Natural killer cell (primary cell): ENCODE measurements at regions of chr12 and their contacts with region 1.

Region 1: GRCh38 chr12:6533923-6534694 is at the start of gene GAPDH:
- DNase-seq: peak; percentile 81 to 90
- ATAC-seq: peak; percentile 53 to 77 (median 71)
- H3K4me3 ChIP-seq: peak within 1 kb of the TSS; percentile 99
- H3K4me3 Mint-ChIP-seq: peak within 1 kb of the TSS; percentile 97
- H3K27ac ChIP-seq: peak within 1 kb of the TSS; percentile 92
- H3K27ac Mint-ChIP-seq: peak within 1 kb of the TSS; percentile 96 to 98
- H3K4me1 ChIP-seq: peaks cover 58% of the 10 kb centered on the region
- H3K4me1 Mint-ChIP-seq: peaks cover 29 to 52% of the 10 kb centered on the region in 2 donors
- H3K27me3 ChIP-seq: no peaks in the 10 kb centered on the region
- H3K27me3 Mint-ChIP-seq: no peaks in the 10 kb centered on the region
- CTCF ChIP-seq: no peak
- total RNA-seq, gene GAPDH: 606 to 729 (median 642) TPM

Region 2: DNA sequence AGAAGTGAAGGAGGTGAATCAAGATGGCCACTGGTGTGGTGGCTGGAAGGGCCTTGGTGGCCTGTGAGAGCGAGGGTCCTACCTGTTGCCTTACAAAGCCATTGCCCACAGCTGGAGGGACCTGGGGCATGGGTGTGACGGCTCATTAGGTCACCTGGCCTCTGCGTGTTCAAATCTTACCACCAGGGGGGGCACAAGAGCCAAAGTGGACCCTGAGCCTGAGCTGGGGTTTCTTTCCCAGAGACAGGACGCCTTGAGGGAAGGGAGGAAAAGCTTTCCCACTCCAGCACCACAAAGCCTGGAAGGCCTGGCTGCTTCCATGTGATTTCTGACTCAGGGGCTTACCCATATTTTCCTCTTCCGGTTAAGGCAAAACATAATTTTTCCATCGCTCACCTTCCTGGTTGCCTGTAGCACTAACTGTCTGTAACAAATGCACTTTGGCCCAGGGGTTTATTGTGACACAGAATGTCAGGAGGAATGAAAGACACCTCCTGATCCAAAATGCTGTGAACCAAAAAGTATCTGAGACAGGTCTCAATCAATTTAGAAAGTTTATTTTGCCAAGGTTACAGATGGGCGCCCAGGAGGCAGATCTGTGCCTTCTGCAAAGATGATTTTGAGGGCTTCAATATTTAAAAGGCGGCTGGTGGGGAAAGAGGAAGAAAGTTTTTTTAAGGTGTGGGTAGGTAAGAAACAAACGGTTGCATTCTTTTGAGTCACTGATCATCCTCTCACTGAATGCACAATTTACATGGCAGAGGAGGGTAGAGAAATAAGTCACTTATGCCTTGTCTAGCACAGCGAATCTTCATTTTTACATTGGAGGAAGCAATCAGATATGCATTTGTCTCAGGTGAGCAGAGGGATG is 338.2 kb before region 1 on chr12:
- intact Hi-C with region 1: loop called (anchors 5 kb)
- DNase-seq: peak; percentile 65 to 84
- ATAC-seq: peak; percentile 72 to 89 (median 85)
- H3K4me3 ChIP-seq: no peak overlapping the region
- H3K4me3 Mint-ChIP-seq: no peak overlapping the region
- H3K27ac ChIP-seq: no peak overlapping the region
- H3K27ac Mint-ChIP-seq: no peak overlapping the region
- H3K4me1 ChIP-seq: peaks cover 13% of the 10 kb centered on the region
- H3K4me1 Mint-ChIP-seq: peaks cover 0 to 17% of the 10 kb centered on the region in 2 donors
- H3K27me3 ChIP-seq: peaks cover 9% of the 10 kb centered on the region
- H3K27me3 Mint-ChIP-seq: peaks cover 23 to 27% of the 10 kb centered on the region in 2 donors
- CTCF ChIP-seq: peak; percentile 83

Region 3: GRCh38 chr12:6335451-6336078 is 198.5 kb before region 1 on chr12:
- intact Hi-C with region 1: loop called (anchors 2 kb)
- DNase-seq: peak; percentile 81 to 93
- ATAC-seq: peak; percentile 55 to 77 (median 70)
- H3K4me3 ChIP-seq: peak overlapping the region; percentile 94
- H3K4me3 Mint-ChIP-seq: no peak overlapping the region
- H3K27ac ChIP-seq: peak overlapping the region; percentile 79
- H3K27ac Mint-ChIP-seq: no peak overlapping the region
- H3K4me1 ChIP-seq: peaks cover 89% of the 10 kb centered on the region
- H3K4me1 Mint-ChIP-seq: peaks cover 6 to 44% of the 10 kb centered on the region in 2 donors
- H3K27me3 ChIP-seq: no peaks in the 10 kb centered on the region
- H3K27me3 Mint-ChIP-seq: no peaks in the 10 kb centered on the region
- CTCF ChIP-seq: peak; percentile 46

Region 4: DNA sequence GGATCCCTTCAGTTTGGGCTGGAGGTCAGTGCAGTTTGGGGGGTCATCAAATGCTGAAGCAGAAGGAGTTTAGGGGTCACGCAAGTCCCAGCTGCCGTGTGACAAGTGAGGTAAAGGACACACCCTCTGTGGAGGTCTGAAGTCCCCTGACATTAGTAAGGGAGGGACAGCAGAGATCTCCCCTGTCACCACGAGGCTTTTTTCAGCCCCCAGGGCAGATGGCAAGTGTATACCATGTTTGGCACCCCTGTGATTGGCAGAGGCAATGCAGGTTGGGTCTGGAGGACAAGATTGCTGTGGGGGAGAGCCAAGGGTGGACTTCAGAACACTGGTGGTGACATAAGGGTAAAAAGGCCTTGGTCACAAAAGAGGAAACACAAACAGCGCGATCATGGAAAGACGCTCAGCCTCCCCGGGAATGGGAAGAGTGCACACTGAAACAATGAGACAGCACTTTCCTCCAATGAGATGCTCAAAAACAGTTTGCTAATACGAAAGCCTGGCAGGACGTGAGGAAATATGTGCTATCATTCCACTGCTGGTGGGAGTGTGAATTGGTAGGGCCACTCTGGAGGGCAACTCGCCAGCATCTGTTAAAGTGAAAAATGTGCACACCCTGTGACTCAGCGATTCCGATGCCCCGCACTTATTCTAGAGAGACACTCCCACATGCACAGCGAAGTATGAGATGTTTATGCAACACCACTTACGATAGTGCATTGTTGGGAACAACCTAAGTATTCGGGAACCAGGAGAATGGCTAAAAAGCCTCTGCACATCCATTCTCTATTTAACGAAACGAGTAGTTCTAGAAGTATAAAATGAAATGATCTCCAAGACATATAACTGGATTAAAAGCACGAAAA is 103.8 kb before region 1 on chr12:
- intact Hi-C with region 1: no loop called
- DNase-seq: peak; percentile 32 to 41
- ATAC-seq: peak; percentile 46 to 58 (median 56)
- H3K4me3 ChIP-seq: no peak overlapping the region
- H3K4me3 Mint-ChIP-seq: peak overlapping the region; percentile 56
- H3K27ac ChIP-seq: no peak overlapping the region
- H3K27ac Mint-ChIP-seq: peak overlapping the region in 1 of 2 donors; percentile 76
- H3K4me1 ChIP-seq: peaks cover 32% of the 10 kb centered on the region
- H3K4me1 Mint-ChIP-seq: peaks cover 14 to 38% of the 10 kb centered on the region in 2 donors
- H3K27me3 ChIP-seq: no peaks in the 10 kb centered on the region
- H3K27me3 Mint-ChIP-seq: no peaks in the 10 kb centered on the region
- CTCF ChIP-seq: no peak

Region 5: DNA sequence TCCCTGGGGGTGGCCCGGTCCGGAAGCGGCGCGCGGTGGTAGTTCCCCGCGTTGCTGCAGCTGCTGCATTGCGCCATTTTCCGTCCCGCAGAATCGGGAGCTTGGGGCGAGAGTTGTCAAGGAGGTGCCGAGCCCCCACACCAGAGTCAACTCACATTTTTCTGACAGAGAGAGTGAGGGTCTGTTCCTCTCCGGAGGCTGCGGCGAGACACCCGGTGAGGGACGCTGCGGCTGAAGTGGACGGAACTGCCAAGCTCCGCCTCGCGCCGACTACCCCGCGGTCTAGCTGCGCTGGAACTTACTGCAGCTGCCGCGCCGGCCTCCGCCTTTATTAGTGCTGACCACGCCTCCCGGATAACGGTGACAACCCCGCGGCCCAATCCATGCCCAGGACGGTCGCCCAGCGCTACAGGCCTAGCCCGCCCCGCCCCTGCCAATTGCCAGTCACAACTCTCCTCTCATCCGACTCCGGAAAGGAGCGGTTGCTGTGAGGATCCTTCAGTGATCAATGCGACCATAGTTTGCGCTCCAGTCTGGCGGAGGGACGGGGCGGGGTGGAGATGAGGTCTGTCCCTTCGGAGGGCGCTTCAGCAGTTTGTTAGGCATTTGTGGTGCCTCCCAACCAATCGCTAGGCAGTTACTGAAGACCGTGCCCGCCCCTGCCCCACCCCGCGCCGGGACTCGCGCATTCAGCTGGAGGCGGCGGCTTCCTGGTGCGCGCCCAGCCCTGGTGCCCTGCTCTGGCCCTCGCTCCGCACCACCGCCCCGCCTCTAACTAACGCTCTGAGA is 63.5 kb before region 1 on chr12 and contains the start of gene VAMP1:
- intact Hi-C with region 1: loop called (anchors 2 kb)
- DNase-seq: peak; percentile 95 to 97
- ATAC-seq: peak; percentile 91 to 97 (median 91)
- H3K4me3 ChIP-seq: peak within 1 kb of the TSS; percentile 94
- H3K4me3 Mint-ChIP-seq: peak within 1 kb of the TSS; percentile 93
- H3K27ac ChIP-seq: peak within 1 kb of the TSS; percentile 94
- H3K27ac Mint-ChIP-seq: peak within 1 kb of the TSS; percentile 95 to 97
- H3K4me1 ChIP-seq: peaks cover 26% of the 10 kb centered on the region
- H3K4me1 Mint-ChIP-seq: peaks cover 39 to 53% of the 10 kb centered on the region in 2 donors
- H3K27me3 ChIP-seq: no peaks in the 10 kb centered on the region
- H3K27me3 Mint-ChIP-seq: no peaks in the 10 kb centered on the region
- CTCF ChIP-seq: no peak
- total RNA-seq, gene VAMP1: 81.0 to 84.3 (median 83.8) TPM

Region 6: DNA sequence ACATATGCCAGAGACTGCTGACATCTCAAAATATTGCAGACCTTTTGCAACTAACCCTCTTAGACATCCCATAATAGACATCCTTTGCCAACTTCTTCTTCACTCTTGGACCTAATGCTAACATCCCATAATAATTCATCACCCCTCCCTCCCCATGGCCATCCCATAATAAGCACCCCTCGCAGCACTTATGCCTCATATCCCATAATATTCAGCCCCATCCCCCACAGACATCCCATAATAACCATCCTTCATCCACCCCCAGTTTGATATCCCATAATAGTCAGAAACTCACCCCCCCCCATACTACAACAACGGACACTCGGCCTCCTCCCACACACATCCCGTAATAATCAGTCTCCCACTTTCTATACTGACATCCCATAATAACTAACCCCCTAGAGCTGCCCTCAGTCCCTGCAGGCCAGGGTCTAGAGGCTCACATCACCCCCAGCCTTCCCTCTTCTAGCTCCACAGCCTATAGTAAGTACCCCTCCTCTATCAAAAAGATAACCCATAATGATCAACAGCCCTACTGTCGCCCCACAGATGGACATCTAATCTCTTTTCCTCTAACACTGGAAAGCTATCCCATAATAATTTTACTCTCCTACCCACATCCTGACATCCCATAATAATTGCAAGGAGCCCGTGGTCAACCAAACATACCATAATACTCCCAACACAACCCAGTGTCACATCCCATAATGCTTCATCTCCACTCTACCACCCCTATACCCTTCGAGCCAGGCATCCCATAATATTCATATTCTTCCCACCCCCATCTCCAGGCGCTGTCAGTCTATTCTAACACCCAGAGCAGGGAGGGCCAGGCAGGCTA is 73.9 kb after region 1 on chr12:
- intact Hi-C with region 1: loop called (anchors 5 kb)
- DNase-seq: peak; percentile 49 to 87
- ATAC-seq: peak; percentile 43 to 69 (median 53)
- H3K4me3 ChIP-seq: no peak overlapping the region
- H3K4me3 Mint-ChIP-seq: no peak overlapping the region
- H3K27ac ChIP-seq: peak overlapping the region; percentile 97
- H3K27ac Mint-ChIP-seq: no peak overlapping the region
- H3K4me1 ChIP-seq: peaks cover 59% of the 10 kb centered on the region
- H3K4me1 Mint-ChIP-seq: peaks cover 40 to 53% of the 10 kb centered on the region in 2 donors
- H3K27me3 ChIP-seq: no peaks in the 10 kb centered on the region
- H3K27me3 Mint-ChIP-seq: no peaks in the 10 kb centered on the region
- CTCF ChIP-seq: no peak